ENCODE measurements at regions of chr13 and their contacts with region 1.

Region 1: DNA sequence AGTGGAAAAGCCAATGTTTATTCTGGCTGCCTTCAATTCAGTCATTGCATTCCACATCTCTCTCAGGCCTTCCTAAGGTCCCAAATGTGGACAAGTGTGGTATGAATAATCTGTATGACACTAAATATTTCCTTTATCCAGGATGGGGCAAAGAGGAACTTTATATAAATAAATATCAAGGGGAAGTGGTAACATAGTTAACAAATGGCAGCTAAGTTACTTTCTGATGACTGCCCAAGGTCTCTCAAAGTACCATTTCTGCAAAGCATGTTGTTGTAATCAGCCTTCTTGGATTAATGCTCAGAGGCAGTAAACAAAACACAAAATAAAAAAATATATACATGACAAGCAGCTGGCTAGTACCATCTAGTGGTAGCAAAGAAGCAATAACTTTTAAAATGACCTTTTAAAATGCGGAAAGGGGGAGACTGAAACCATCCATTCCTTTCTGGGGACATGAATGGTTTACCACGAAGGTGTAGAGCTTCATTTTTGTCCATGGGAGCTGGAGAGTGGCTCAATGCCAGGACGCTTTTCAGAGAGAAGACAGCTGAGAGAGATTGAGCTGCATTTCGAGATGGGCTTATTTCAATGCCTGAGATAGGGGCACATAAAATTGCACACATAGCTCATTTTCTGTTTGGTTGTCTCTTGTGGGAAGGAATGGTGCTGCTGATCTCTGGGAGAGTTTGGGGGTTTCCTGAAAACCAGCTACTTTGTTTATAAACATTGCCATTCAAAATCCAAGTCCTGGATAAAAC is 259.2 kb downstream of the RFC3 start:
- DNase-seq: peak; percentile 55
- H3K4me3 ChIP-seq: no peak overlapping the region
- H3K27me3 ChIP-seq: no peaks in the 10 kb centered on the region
- CTCF ChIP-seq: peak; percentile 58

Region 2: GRCh38 chr13:33799950-33800592 is 277.1 kb before region 1 on chr13:
- CTCF ChIA-PET with region 1: interaction called, 12 read pairs
- POLR2A ChIA-PET with region 1: no interaction called
- DNase-seq: no peak
- H3K4me3 ChIP-seq: no peak overlapping the region
- H3K27me3 ChIP-seq: no peaks in the 10 kb centered on the region
- CTCF ChIP-seq: peak; percentile 64

Region 3: GRCh38 chr13:33865945-33866344 is 211.2 kb before region 1 on chr13:
- CTCF ChIA-PET with region 1: no interaction called
- POLR2A ChIA-PET with region 1: no interaction called
- DNase-seq: no peak
- H3K4me3 ChIP-seq: no peak overlapping the region
- H3K27me3 ChIP-seq: no peaks in the 10 kb centered on the region
- CTCF ChIP-seq: no peak

Region 4: GRCh38 chr13:33931397-33932311 is 145.5 kb before region 1 on chr13:
- CTCF ChIA-PET with region 1: interaction called, 43 read pairs
- POLR2A ChIA-PET with region 1: no interaction called
- DNase-seq: no peak
- H3K4me3 ChIP-seq: no peak overlapping the region
- H3K27me3 ChIP-seq: no peaks in the 10 kb centered on the region
- CTCF ChIP-seq: peak; percentile 53

Region 5: GRCh38 chr13:34322014-34322742 is 245.1 kb after region 1 on chr13:
- CTCF ChIA-PET with region 1: no interaction called
- POLR2A ChIA-PET with region 1: no interaction called
- DNase-seq: no peak
- H3K4me3 ChIP-seq: no peak overlapping the region
- H3K27me3 ChIP-seq: no peaks in the 10 kb centered on the region
- CTCF ChIP-seq: no peak

Measured in BJ (cell line).